Stomach (tissue), 19 donors: ENCODE measurements at regions of chr2 and their contacts with region 1.

Region 1: GRCh38 chr2:219155054-219155644 is 5.5 kb downstream of the NHEJ1 start:
- DNase-seq: peak; percentile 35 to 90
- H3K4me3 ChIP-seq: no peak overlapping the region
- H3K27ac ChIP-seq: no peak overlapping the region
- H3K4me1 ChIP-seq: peaks cover 4 to 13% (median 8%) of the 10 kb centered on the region in 4 donors
- H3K27me3 ChIP-seq: no peaks in the 10 kb centered on the region
- CTCF ChIP-seq: peak in 5 of 7 experiments; percentile 17 to 71 (median 63)
- EP300 ChIP-seq: no peak
- POLR2A ChIP-seq: no peak

Region 2: GRCh38 chr2:218910741-218911140 is 244.4 kb before region 1 on chr2:
- intact Hi-C with region 1: no loop called
- DNase-seq: no peak
- H3K4me3 ChIP-seq: no peak overlapping the region
- H3K27ac ChIP-seq: no peak overlapping the region
- H3K4me1 ChIP-seq: peaks cover 0 to 18% (median 14%) of the 10 kb centered on the region in 4 donors
- H3K27me3 ChIP-seq: peaks cover 0 to 19% (median 0%) of the 10 kb centered on the region in 3 donors
- CTCF ChIP-seq: no peak
- EP300 ChIP-seq: no peak
- POLR2A ChIP-seq: no peak

Region 3: DNA sequence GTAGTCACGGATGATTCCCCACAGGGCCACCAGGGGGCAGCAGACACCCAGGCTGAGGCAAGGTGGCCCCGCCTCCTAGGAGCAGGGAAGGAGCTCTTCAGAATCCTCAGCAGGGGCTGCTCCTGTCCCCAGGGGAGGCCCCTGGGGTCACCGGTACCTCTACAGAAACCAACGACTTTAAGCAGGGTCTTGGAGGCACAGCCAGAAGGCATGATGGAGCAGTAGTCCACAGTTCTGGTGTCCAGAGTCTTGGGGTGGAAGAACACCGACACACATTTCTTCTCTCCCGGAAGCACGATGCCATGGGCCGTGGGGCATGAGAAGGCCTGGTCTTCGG is 125.4 kb before region 1 on chr2:
- intact Hi-C with region 1: loop called (anchors 10 kb)
- DNase-seq: peak; percentile 90 to 92
- H3K4me3 ChIP-seq: no peak overlapping the region
- H3K27ac ChIP-seq: no peak overlapping the region
- H3K4me1 ChIP-seq: no peaks in the 10 kb centered on the region
- H3K27me3 ChIP-seq: peaks cover 0 to 57% (median 6%) of the 10 kb centered on the region in 3 donors
- CTCF ChIP-seq: peak in 6 of 7 experiments; percentile 85 to 98 (median 90)
- EP300 ChIP-seq: no peak
- POLR2A ChIP-seq: no peak

Region 4: GRCh38 chr2:219057709-219058540 is 97.2 kb before region 1 on chr2:
- intact Hi-C with region 1: loop called (anchors 5 kb)
- DNase-seq: peak; percentile 87 to 93
- H3K4me3 ChIP-seq: peak overlapping the region; percentile 46 to 61 (median 56)
- H3K27ac ChIP-seq: peak overlapping the region in 2 of 5 donors; percentile 24 to 85
- H3K4me1 ChIP-seq: peaks cover 41 to 55% (median 53%) of the 10 kb centered on the region in 4 donors
- H3K27me3 ChIP-seq: peaks cover 15 to 91% (median 55%) of the 10 kb centered on the region in 3 donors
- CTCF ChIP-seq: peak in 5 of 7 experiments; percentile 90 to 96 (median 92)
- EP300 ChIP-seq: no peak
- POLR2A ChIP-seq: no peak

Region 5: GRCh38 chr2:219352448-219353023 is 197.4 kb after region 1 on chr2:
- intact Hi-C with region 1: no loop called
- DNase-seq: peak; percentile 63 to 76
- H3K4me3 ChIP-seq: no peak overlapping the region
- H3K27ac ChIP-seq: no peak overlapping the region
- H3K4me1 ChIP-seq: no peaks in the 10 kb centered on the region
- H3K27me3 ChIP-seq: peaks cover 0 to 88% (median 23%) of the 10 kb centered on the region in 3 donors
- CTCF ChIP-seq: peak in 4 of 7 experiments; percentile 27 to 57 (median 37)
- EP300 ChIP-seq: no peak
- POLR2A ChIP-seq: no peak